ENCODE measurements at regions of chr14 and their contacts with region 1.

Region 1: DNA sequence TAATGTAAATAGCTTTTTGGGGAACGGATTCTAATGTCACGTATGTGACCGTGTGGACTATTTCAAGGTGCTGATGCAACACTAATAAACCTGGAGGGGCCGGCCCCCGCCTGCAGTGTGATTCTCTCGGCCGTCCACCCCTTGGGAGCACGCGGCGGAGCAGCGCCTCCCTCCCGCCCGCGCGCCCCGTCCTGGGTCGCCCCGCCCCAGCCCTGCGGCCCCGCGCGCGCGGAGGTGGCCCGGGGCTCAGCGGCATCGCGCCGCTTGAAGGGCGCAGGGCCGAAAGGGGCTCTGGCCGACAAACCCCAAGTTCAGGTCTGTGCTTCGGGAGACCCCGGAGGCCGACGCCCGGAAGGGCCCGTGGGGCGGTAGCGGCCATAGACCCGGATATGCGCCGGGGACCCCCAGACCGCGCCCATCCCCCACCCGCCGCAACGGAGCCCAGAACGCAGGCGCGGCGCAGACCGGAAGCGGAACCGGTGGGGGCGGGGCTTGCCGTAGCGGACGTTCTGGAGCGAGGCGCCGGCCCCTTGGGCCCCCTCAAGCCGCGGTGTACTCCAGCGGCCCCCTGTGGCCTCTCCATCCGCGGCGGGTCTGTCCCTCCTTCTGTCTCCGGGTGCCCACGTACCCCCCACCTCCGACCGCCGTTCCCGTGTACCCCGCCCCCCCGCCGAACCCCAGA is at the start of gene TEX22:
- DNase-seq: peak; percentile 41
- ATAC-seq: peak; percentile 93
- H3K4me3 ChIP-seq: peak within 1 kb of the TSS; percentile 88
- H3K27ac ChIP-seq: peak within 1 kb of the TSS; percentile 84
- H3K4me1 ChIP-seq: peaks cover 15% of the 10 kb centered on the region
- H3K27me3 ChIP-seq: no peaks in the 10 kb centered on the region
- CTCF ChIP-seq: peak; percentile 5 to 38 (median 35); a peak in 3 of 6 replicates
- EP300 ChIP-seq: no peak
- POLR2A ChIP-seq: peak; percentile 84
- RAD21 ChIP-seq: no peak
- polyA plus RNA-seq, gene TEX22: 0.02 TPM in 1 of 2 experiments, not detected in the other

Region 2: GRCh38 chr14:105375635-105376057 is 22.5 kb before region 1 on chr14:
- CTCF ChIA-PET with region 1: interaction called, 10 read pairs
- POLR2A ChIA-PET with region 1: no interaction called
- RAD21 ChIA-PET with region 1: no interaction called
- SMC1A ChIA-PET with region 1: interaction called, 5 read pairs
- in situ Hi-C with region 1: no loop called
- intact Hi-C with region 1: no loop called
- DNase-seq: no peak
- ATAC-seq: peak; percentile 50
- H3K4me3 ChIP-seq: no peak overlapping the region
- H3K27ac ChIP-seq: no peak overlapping the region
- H3K4me1 ChIP-seq: no peaks in the 10 kb centered on the region; the same call in none of the 2 replicates
- H3K27me3 ChIP-seq: no peaks in the 10 kb centered on the region
- CTCF ChIP-seq: no peak
- EP300 ChIP-seq: no peak
- POLR2A ChIP-seq: no peak
- RAD21 ChIP-seq: no peak